Panc1 (cell line): ENCODE measurements at regions of chr4 and their contacts with region 1.

Region 1: DNA sequence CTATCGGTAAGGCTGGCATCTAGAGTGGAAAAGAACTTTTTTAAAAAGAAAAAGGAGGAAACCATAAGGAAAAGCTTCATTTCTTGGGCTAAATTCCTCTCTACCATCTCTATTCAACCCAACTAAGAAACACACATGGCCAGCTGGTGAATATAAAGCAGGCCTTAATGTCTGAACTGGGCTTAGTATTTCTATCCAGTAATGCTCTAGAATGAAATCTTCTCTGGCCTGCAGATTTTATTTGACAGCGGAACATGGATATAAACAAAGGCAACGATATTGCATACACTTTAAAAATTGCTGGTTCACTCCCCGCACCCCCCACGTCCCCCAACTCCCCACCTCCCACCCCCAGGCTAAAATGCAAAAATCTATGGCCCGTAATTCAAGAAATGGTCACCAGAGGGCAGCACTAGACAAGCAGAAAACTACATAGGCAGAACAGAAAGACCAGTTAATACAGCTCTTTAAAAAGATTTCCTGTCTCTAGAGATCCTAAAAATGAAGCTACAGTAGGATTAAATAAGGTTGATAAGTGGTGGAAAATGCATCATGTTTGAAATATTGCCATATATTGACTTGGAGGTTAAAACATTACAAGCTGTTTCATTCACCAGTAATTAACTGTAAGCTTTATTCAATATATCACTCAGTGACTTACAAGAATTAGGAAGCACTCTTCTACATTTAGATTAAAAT is 155.2 kb upstream of the GALNT7 start:
- DNase-seq: no peak
- ATAC-seq: 0 out of 2 replicates have a peak, but pooled peaks have one; percentile 52
- H3K4me3 ChIP-seq: no peak overlapping the region
- H3K27ac ChIP-seq: peak overlapping the region; percentile 66; the same call in 1 of the 2 replicates
- H3K4me1 ChIP-seq: peaks cover 15% of the 10 kb centered on the region
- H3K27me3 ChIP-seq: no peaks in the 10 kb centered on the region
- CTCF ChIP-seq: peak; percentile 77

Region 2: GRCh38 chr4:172850838-172851237 is 162.5 kb before region 1 on chr4:
- CTCF ChIA-PET with region 1: interaction called, 10 read pairs
- POLR2A ChIA-PET with region 1: no interaction called
- in situ Hi-C with region 1: no loop called
- intact Hi-C with region 1: no loop called
- DNase-seq: no peak
- ATAC-seq: no peak
- H3K4me3 ChIP-seq: no peak overlapping the region
- H3K27ac ChIP-seq: no peak overlapping the region
- H3K4me1 ChIP-seq: no peaks in the 10 kb centered on the region
- H3K27me3 ChIP-seq: no peaks in the 10 kb centered on the region
- CTCF ChIP-seq: no peak

Region 3: GRCh38 chr4:173168396-173169177 is 155.2 kb after region 1 on chr4 and contains the start of gene GALNT7:
- CTCF ChIA-PET with region 1: no interaction called
- POLR2A ChIA-PET with region 1: interaction called, 15 read pairs
- in situ Hi-C with region 1: no loop called
- intact Hi-C with region 1: loop called (anchors 5 kb)
- DNase-seq: no peak
- ATAC-seq: peak; percentile 74
- H3K4me3 ChIP-seq: peak within 1 kb of the TSS; percentile 75 to 78
- H3K27ac ChIP-seq: peak within 1 kb of the TSS; percentile 98
- H3K4me1 ChIP-seq: peaks cover 34% of the 10 kb centered on the region
- H3K27me3 ChIP-seq: no peaks in the 10 kb centered on the region
- CTCF ChIP-seq: no peak
- total RNA-seq, gene GALNT7: 156 TPM

Region 4: GRCh38 chr4:173257732-173258717 is 244.6 kb after region 1 on chr4:
- CTCF ChIA-PET with region 1: interaction called, 7 read pairs
- POLR2A ChIA-PET with region 1: no interaction called
- in situ Hi-C with region 1: no loop called
- intact Hi-C with region 1: loop called (anchors 1 kb)
- DNase-seq: peak; percentile 60
- ATAC-seq: peak; percentile 93
- H3K4me3 ChIP-seq: no peak overlapping the region
- H3K27ac ChIP-seq: peak overlapping the region; percentile 98
- H3K4me1 ChIP-seq: peaks cover 47% of the 10 kb centered on the region
- H3K27me3 ChIP-seq: no peaks in the 10 kb centered on the region
- CTCF ChIP-seq: peak; percentile 80

Region 5: DNA sequence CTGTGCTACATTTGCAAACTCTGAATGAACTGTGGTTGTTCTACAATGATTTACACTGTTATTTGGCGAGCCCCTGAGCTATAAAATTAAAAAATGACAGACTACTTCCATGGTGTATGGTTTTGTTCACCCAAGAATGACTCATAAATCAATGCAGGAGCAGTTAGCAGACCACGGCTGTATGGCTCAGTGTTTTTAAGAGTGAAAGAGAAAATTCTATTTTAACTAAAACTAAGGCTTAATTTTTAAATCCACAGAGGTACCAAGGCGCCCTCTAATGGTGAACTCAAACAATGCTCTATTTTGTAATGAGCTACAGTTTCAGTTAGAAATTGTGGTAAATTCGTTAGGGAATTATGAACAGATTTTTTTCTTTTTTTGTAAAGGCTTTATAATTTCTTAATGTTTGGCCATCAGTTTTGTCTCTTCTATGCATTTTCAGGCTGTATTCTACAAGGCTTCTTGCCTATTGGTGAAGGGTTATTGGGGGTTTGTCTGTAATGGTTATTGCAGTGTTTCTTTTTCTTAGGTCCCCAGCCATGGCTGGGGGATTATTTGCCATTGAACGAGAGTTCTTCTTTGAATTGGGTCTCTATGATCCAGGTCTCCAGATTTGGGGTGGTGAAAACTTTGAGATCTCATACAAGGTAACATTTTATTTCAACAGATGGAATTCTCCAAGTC is 288.3 kb after region 1 on chr4:
- CTCF ChIA-PET with region 1: interaction called, 9 read pairs
- POLR2A ChIA-PET with region 1: no interaction called
- in situ Hi-C with region 1: no loop called
- intact Hi-C with region 1: loop called (anchors 10 kb)
- DNase-seq: no peak
- ATAC-seq: no peak
- H3K4me3 ChIP-seq: no peak overlapping the region
- H3K27ac ChIP-seq: peak overlapping the region; percentile 59; the same call in 1 of the 2 replicates
- H3K4me1 ChIP-seq: peaks cover 4% of the 10 kb centered on the region; the same call in 1 of the 2 replicates
- H3K27me3 ChIP-seq: no peaks in the 10 kb centered on the region
- CTCF ChIP-seq: peak; percentile 66; the same call in 1 of the 2 replicates

Region 6: GRCh38 chr4:173420324-173420752 is 407.0 kb after region 1 on chr4:
- CTCF ChIA-PET with region 1: no interaction called
- POLR2A ChIA-PET with region 1: no interaction called
- in situ Hi-C with region 1: no loop called
- intact Hi-C with region 1: loop called (anchors 2 kb)
- DNase-seq: peak; percentile 10
- ATAC-seq: no peak
- H3K4me3 ChIP-seq: no peak overlapping the region
- H3K27ac ChIP-seq: no peak overlapping the region
- H3K4me1 ChIP-seq: no peaks in the 10 kb centered on the region
- H3K27me3 ChIP-seq: no peaks in the 10 kb centered on the region
- CTCF ChIP-seq: peak; percentile 55; the same call in 1 of the 2 replicates

Region 7: GRCh38 chr4:173494013-173494970 is 480.9 kb after region 1 on chr4:
- CTCF ChIA-PET with region 1: interaction called, 10 read pairs
- POLR2A ChIA-PET with region 1: no interaction called
- in situ Hi-C with region 1: no loop called
- intact Hi-C with region 1: no loop called
- DNase-seq: peak; percentile 53
- ATAC-seq: peak; percentile 98
- H3K4me3 ChIP-seq: peak overlapping the region; percentile 44 to 68
- H3K27ac ChIP-seq: no peak overlapping the region
- H3K4me1 ChIP-seq: 0 out of 2 replicates have a peak, but pooled peaks cover 2% of the 10 kb centered on the region
- H3K27me3 ChIP-seq: peaks cover 5% of the 10 kb centered on the region
- CTCF ChIP-seq: peak; percentile 83

Region 8: GRCh38 chr4:173859091-173859713 is 845.8 kb after region 1 on chr4:
- CTCF ChIA-PET with region 1: no interaction called
- POLR2A ChIA-PET with region 1: no interaction called
- in situ Hi-C with region 1: no loop called
- intact Hi-C with region 1: no loop called
- DNase-seq: no peak
- ATAC-seq: no peak
- H3K4me3 ChIP-seq: no peak overlapping the region
- H3K27ac ChIP-seq: no peak overlapping the region
- H3K4me1 ChIP-seq: no peaks in the 10 kb centered on the region
- H3K27me3 ChIP-seq: no peaks in the 10 kb centered on the region
- CTCF ChIP-seq: no peak